HEK293 (cell line): ENCODE measurements at regions of chr7 and their contacts with region 1.

Region 1: GRCh38 chr7:54788664-54789063 is 29.7 kb upstream of the SEC61G start:
- H3K4me3 ChIP-seq: no peak overlapping the region
- H3K27ac ChIP-seq: no peak overlapping the region
- H3K4me1 ChIP-seq: no peaks in the 10 kb centered on the region
- CTCF ChIP-seq: peak; percentile 30; the same call in 1 of the 2 replicates

Region 2: GRCh38 chr7:54839538-54840213 is 51.0 kb after region 1 on chr7:
- CTCF ChIA-PET with region 1: interaction called, 33 read pairs
- POLR2A ChIA-PET with region 1: no interaction called
- H3K4me3 ChIP-seq: no peak overlapping the region
- H3K27ac ChIP-seq: no peak overlapping the region
- H3K4me1 ChIP-seq: no peaks in the 10 kb centered on the region
- CTCF ChIP-seq: peak; percentile 45